Activated B cell treated with CpG ODN at 0.5 μM for 24 hours (primary cell): ENCODE measurements at regions of chr6 and their contacts with region 1.

Region 1: DNA sequence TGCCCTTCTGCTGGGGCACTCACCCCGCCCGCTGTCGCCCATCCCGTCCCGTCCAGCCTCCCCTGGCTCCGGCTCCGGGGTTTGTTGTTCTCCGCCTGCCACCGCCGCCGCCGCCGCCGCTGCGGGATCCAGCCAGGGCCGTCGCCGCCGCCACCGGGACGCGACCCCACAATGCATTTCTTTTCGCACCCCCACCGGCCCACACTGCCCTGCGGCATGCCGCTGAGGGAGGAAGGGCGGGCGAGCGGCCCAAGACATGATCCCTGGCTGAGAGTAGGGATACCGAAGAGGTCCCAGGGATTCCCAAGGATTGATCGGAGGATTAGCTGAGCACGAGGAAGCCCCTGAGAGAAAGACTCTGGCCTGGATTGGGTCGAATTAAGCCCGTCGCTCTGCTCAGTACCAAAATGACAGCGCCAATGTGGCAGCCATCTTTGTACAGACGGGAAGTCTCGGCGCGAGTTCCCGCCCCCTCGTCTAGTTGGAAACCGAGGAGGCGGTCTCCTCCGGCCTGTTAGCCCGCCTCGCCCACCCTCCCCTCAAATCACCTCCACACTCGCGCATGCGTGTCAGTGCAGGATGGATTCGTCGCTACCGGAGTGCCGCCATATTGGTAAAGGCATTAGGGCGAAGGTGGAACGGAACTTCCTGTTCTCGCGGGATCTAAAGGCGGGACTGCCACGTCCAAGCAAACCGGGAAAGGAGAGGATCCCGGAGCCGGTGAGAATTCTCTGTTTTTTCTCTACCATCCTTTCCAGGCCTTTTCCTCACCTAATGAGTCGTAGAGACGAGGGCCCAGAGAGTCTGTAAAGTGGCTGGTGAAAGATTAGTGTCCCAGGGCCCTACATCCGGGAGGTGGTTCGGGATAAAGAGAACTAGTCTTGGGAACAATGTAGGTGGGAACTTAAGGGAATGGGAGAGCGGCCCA is at the starts of genes RXRB and SLC39A7:
- DNase-seq: peak; percentile 89
- ATAC-seq: peak; percentile 74
- H3K4me3 Mint-ChIP-seq: peak within 1 kb of the TSS; percentile 99
- H3K27ac Mint-ChIP-seq: peak within 1 kb of the TSS; percentile 96
- H3K4me1 Mint-ChIP-seq: peaks cover 75% of the 10 kb centered on the region
- H3K27me3 Mint-ChIP-seq: no peaks in the 10 kb centered on the region
- CTCF ChIP-seq: no peak
- total RNA-seq, gene RXRB: 72.4 and 74.3 TPM in 2 replicates
- total RNA-seq, gene SLC39A7: 31.7 and 35.2 TPM in 2 replicates

Region 2: DNA sequence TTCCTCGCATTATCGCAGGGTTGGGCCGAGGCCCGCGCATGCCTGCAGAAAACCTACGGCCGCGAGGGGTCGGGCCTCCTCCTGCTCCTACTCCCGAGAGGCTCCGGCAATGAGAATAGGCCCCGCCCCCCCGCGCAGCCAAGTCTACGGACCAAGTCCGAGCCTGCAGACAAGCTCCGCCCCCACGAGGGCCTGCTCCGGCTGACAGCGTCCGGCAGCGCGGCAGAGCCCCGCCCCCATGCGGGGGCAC is 1004.9 kb before region 1 on chr6:
- CTCF ChIA-PET with region 1: no interaction called
- POLR2A ChIA-PET with region 1: no interaction called
- intact Hi-C with region 1: loop called (anchors 5 kb)
- DNase-seq: peak; percentile 99
- ATAC-seq: peak; percentile 83
- H3K4me3 Mint-ChIP-seq: peak overlapping the region; percentile 99
- H3K27ac Mint-ChIP-seq: peak overlapping the region; percentile 100
- H3K4me1 Mint-ChIP-seq: peaks cover 57% of the 10 kb centered on the region
- H3K27me3 Mint-ChIP-seq: peaks cover 1% of the 10 kb centered on the region
- CTCF ChIP-seq: no peak

Region 3: DNA sequence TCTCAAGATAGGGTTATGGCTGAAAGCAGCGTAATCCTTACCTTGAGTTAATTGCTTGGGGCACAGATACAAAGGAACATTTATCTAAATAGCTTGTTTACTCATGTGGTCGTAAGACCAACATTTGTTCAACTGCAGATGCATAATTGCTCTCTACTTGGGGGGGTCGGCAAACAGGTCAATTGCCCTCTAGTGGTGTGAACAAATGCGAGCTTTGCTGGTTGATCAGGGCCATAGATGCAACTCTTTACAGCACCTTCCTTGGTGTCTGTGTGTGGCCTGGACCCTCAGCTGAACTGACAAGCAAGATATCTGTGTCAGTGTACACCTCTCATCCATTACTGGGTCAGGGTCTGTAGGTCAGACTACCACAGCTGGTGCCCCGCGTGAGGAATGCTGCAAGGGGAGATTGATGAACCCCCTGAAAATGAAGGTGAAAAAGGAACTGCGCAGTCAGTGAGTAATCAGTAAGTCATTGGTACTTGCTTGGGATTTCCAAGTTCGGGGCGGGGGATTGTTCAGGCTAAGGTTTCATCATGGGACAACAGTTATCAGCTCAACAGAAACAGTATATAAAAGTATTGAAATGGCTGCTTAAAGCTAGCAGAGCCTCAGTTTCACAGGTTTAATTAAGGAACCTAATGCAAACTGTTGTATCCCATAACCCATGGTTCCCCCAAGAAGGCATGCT is 151.0 kb before region 1 on chr6:
- CTCF ChIA-PET with region 1: no interaction called
- POLR2A ChIA-PET with region 1: no interaction called
- intact Hi-C with region 1: no loop called
- DNase-seq: no peak
- ATAC-seq: no peak
- H3K4me3 Mint-ChIP-seq: no peak overlapping the region
- H3K27ac Mint-ChIP-seq: no peak overlapping the region
- H3K4me1 Mint-ChIP-seq: peaks cover 20% of the 10 kb centered on the region
- H3K27me3 Mint-ChIP-seq: no peaks in the 10 kb centered on the region
- CTCF ChIP-seq: no peak

Region 4: DNA sequence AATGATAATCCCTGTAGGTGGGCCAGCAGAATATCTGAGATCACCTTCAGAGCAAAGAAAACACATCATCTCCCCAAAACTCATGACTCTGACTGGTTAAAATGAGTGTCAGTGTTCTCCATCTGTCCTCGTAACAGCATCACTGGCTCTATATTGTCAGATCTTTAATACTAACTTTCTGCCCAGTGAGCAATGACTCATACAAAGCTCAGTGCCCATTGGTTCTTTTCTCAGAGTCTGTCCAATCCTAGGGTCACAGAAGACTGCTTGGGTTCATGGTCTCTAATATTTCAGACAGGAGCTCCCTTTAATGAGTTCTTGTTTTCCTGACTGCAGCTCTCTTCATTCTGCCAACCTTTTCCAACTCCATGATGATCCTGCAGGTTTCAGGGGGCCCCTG is 88.3 kb before region 1 on chr6:
- CTCF ChIA-PET with region 1: no interaction called
- POLR2A ChIA-PET with region 1: interaction called, 8 read pairs
- intact Hi-C with region 1: loop called (anchors 2 kb)
- DNase-seq: no peak
- ATAC-seq: peak; percentile 94
- H3K4me3 Mint-ChIP-seq: peak overlapping the region; percentile 76
- H3K27ac Mint-ChIP-seq: peak overlapping the region; percentile 73
- H3K4me1 Mint-ChIP-seq: peaks cover 53% of the 10 kb centered on the region
- H3K27me3 Mint-ChIP-seq: peaks cover 3% of the 10 kb centered on the region
- CTCF ChIP-seq: no peak

Region 5: DNA sequence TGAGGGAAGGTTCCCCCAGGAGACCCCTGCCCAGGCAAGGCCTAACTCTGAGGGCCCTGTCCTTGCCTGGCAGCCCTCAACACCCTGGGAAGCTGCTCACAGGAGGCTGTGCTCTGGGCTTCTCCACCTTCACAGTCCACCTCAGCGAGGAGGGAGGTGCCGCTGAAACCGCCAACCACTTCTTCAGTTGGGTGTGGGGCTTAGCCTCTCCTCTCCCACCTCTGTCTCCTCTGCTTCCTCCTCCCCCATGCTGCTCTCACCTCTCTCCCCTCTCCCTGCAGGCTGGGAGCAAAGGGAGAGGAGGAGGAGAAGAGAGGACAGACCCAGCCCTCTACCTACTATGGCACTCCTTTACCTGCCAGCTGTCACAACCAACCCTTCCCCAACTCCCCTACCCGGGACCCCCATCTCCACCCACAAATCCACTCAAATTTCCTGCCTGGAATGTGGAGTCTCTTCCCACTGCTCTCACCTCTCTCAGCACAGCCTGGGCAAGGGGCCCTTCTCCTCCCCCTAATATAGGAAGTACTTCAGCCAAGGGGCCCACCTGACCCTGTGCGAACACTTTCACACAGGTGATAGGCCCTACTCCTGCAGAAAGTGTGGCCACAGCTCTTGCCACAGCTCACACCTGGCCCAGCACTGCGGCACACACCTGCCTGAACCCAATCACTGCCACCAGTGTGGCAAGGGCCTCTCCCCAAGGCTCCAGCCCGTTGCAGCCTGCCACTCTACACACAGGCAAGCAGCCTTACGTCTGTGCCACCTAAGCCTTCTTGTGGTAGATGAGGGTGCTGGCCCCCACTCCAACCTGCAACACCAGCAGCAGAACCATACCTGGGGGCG is 15.0 kb after region 1 on chr6:
- CTCF ChIA-PET with region 1: no interaction called
- POLR2A ChIA-PET with region 1: no interaction called
- intact Hi-C with region 1: no loop called
- DNase-seq: no peak
- ATAC-seq: no peak
- H3K4me3 Mint-ChIP-seq: no peak overlapping the region
- H3K27ac Mint-ChIP-seq: no peak overlapping the region
- H3K4me1 Mint-ChIP-seq: peaks cover 18% of the 10 kb centered on the region
- H3K27me3 Mint-ChIP-seq: peaks cover 45% of the 10 kb centered on the region
- CTCF ChIP-seq: no peak

Region 6: GRCh38 chr6:33271458-33272274 is 71.2 kb after region 1 on chr6 and contains the starts of genes RPS18 and VPS52:
- CTCF ChIA-PET with region 1: no interaction called
- POLR2A ChIA-PET with region 1: interaction called, 12 read pairs
- intact Hi-C with region 1: loop called (anchors 1 kb)
- DNase-seq: peak; percentile 79
- ATAC-seq: peak; percentile 84
- H3K4me3 Mint-ChIP-seq: peak within 1 kb of the TSS; percentile 100
- H3K27ac Mint-ChIP-seq: peak within 1 kb of the TSS; percentile 100
- H3K4me1 Mint-ChIP-seq: peaks cover 59% of the 10 kb centered on the region
- H3K27me3 Mint-ChIP-seq: no peaks in the 10 kb centered on the region
- CTCF ChIP-seq: no peak
- total RNA-seq, gene RPS18: 4,710 and 5,877 TPM in 2 replicates
- total RNA-seq, gene VPS52: 82.0 and 97.2 TPM in 2 replicates

Region 7: GRCh38 chr6:33323623-33323948 is 123.1 kb after region 1 on chr6:
- CTCF ChIA-PET with region 1: no interaction called
- POLR2A ChIA-PET with region 1: no interaction called
- intact Hi-C with region 1: loop called (anchors 1 kb)
- DNase-seq: peak; percentile 38
- ATAC-seq: no peak
- H3K4me3 Mint-ChIP-seq: peak overlapping the region; percentile 95
- H3K27ac Mint-ChIP-seq: peak overlapping the region; percentile 93
- H3K4me1 Mint-ChIP-seq: peaks cover 61% of the 10 kb centered on the region
- H3K27me3 Mint-ChIP-seq: no peaks in the 10 kb centered on the region
- CTCF ChIP-seq: no peak

Region 8: DNA sequence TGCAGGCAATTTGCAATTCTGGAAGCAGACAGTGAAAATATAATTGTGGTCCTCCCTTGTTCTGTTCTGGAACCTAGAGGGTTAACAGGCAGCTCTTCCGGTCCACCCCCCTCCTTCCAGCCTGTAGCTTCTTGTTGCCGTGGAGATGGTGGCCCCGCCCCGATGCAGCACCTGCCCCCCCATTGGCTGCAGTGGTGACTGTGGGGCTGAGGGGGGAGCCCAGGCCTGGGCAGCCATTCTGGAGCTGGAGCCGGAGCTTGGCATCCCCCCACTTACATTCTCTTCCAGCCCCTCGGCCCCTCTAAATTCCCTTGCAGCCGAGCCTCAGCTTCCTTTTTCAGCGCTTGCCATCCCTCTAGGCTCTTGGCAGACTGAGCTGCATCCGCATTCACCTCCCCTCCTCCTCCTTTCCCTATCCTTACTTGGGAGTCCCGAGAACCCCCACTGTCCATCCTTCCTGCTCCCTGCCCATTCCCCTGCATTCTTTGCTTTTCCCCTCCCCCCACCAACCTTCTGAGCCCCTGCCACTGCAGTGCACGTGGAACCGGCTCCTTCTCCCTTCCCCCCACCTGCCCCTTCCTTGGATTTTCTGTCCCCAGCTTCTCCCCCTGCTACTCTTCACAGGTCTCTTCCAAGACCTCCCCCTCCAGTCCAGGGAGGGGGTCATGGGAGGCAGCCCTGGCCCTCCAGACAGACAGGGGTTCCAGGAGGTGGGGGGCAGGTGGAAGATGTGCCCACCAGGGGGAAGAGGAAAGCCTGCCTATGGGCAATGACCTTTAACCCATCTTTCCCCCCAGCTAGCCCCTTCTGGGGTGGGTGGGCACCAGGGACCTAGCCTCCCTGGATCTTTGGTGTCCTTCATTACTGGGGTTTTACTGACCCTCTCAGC is 230.8 kb after region 1 on chr6:
- CTCF ChIA-PET with region 1: no interaction called
- POLR2A ChIA-PET with region 1: no interaction called
- intact Hi-C with region 1: loop called (anchors 5 kb)
- DNase-seq: peak; percentile 69
- ATAC-seq: peak; percentile 56
- H3K4me3 Mint-ChIP-seq: peak overlapping the region; percentile 67
- H3K27ac Mint-ChIP-seq: peak overlapping the region; percentile 60
- H3K4me1 Mint-ChIP-seq: peaks cover 78% of the 10 kb centered on the region
- H3K27me3 Mint-ChIP-seq: no peaks in the 10 kb centered on the region
- CTCF ChIP-seq: no peak

Region 9: GRCh38 chr6:34583461-34583860 is 1383.0 kb after region 1 on chr6:
- CTCF ChIA-PET with region 1: no interaction called
- POLR2A ChIA-PET with region 1: no interaction called
- intact Hi-C with region 1: no loop called
- DNase-seq: no peak
- ATAC-seq: no peak
- H3K4me3 Mint-ChIP-seq: no peak overlapping the region
- H3K27ac Mint-ChIP-seq: no peak overlapping the region
- H3K4me1 Mint-ChIP-seq: peaks cover 5% of the 10 kb centered on the region
- H3K27me3 Mint-ChIP-seq: no peaks in the 10 kb centered on the region
- CTCF ChIP-seq: no peak

Region 10: GRCh38 chr6:35071347-35071994 is 1871.0 kb after region 1 on chr6:
- CTCF ChIA-PET with region 1: no interaction called
- POLR2A ChIA-PET with region 1: no interaction called
- intact Hi-C with region 1: no loop called
- DNase-seq: no peak
- ATAC-seq: no peak
- H3K4me3 Mint-ChIP-seq: no peak overlapping the region
- H3K27ac Mint-ChIP-seq: no peak overlapping the region
- H3K4me1 Mint-ChIP-seq: no peaks in the 10 kb centered on the region
- H3K27me3 Mint-ChIP-seq: no peaks in the 10 kb centered on the region
- CTCF ChIP-seq: no peak